Breast epithelium (tissue), 4 donors: ENCODE measurements at regions of chr17 and their contacts with region 1.

Region 1: DNA sequence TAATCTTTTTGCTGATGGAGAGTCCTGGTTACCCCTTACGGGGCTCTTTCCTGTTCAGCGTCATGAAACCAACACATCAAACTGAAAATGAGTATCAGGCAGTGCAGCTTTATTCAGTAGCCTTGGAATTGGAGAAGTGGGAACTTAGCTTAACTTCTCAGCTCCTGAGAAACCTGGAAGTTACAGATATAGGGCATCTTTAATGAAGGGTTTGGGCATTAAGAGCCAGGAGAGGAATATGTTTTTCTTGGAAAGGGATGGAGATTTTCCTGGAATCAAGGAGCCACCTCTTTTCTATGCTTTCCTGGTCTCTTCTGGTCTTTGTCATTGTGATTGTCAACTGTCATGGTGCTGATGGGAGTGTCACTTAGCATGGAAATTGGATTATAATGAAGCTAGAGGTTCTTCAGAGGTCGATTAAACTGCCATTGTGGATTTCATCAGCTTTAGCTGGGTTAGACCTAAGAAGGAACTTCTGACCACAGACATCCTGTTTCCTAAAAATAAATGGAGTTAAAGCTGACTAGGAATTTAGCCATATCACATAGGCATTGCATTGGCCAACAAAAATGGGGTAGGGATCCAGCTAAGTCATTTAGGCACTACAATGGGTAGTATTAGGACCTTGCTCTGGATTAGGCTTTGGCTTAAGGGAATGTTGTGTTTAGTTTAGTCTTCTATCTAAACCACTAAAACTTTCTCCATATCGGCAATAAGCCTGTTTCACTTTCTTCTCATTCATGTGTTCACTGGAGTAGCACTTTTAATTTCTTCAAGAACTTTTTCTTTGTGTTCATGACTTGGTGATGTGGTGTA is 186.4 kb downstream of the BCAS3 start:
- DNase-seq: no peak
- H3K4me3 ChIP-seq: no peak overlapping the region
- H3K27ac ChIP-seq: no peak overlapping the region
- H3K4me1 ChIP-seq: no peaks in the 10 kb centered on the region
- H3K27me3 ChIP-seq: no peaks in the 10 kb centered on the region
- CTCF ChIP-seq: no peak
- POLR2A ChIP-seq: no peak

Region 2: DNA sequence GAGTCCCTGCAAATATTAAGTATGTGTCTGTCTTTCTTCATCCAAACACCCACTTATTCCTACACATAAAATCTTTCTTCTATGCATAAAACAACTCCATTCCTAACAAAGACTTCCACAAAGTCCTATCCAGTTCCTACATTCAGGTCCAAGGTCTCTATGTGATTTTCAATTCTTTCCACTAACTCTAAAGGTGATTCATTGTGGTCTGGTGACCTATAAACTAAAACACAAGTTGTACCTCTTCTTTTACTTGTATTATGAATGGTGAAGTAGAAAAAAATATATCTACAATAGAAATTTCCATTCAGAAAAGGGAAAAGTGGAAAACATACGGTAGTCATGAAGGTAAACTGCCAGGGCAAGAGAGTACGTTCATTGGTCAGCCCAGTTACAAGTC is 528.8 kb before region 1 on chr17:
- intact Hi-C with region 1: loop called (anchors 5 kb)
- DNase-seq: no peak
- H3K4me3 ChIP-seq: no peak overlapping the region
- H3K27ac ChIP-seq: no peak overlapping the region
- H3K4me1 ChIP-seq: no peaks in the 10 kb centered on the region
- H3K27me3 ChIP-seq: no peaks in the 10 kb centered on the region
- CTCF ChIP-seq: no peak
- POLR2A ChIP-seq: no peak

Region 3: DNA sequence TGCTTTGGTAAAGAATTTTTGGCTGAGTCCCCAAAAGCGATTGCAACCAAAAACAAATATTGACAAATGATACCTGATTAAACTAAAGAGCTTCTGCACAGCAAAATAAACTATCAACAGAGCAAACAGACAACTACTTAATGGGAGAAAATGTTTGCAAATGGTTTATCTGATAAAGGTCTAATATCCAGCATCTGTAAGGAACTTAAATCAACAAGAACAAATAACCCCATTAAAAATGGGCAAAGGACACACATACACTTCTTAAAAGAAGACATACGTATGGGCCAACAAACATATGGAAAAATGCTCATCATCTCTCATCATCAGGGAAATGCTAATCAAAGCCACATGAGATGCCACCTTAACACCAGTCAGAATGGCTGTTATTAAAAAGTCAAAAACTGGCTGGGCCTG is 56.1 kb after region 1 on chr17:
- intact Hi-C with region 1: no loop called
- DNase-seq: no peak
- H3K4me3 ChIP-seq: no peak overlapping the region
- H3K27ac ChIP-seq: no peak overlapping the region
- H3K4me1 ChIP-seq: no peaks in the 10 kb centered on the region
- H3K27me3 ChIP-seq: no peaks in the 10 kb centered on the region
- CTCF ChIP-seq: no peak
- POLR2A ChIP-seq: no peak

Region 4: DNA sequence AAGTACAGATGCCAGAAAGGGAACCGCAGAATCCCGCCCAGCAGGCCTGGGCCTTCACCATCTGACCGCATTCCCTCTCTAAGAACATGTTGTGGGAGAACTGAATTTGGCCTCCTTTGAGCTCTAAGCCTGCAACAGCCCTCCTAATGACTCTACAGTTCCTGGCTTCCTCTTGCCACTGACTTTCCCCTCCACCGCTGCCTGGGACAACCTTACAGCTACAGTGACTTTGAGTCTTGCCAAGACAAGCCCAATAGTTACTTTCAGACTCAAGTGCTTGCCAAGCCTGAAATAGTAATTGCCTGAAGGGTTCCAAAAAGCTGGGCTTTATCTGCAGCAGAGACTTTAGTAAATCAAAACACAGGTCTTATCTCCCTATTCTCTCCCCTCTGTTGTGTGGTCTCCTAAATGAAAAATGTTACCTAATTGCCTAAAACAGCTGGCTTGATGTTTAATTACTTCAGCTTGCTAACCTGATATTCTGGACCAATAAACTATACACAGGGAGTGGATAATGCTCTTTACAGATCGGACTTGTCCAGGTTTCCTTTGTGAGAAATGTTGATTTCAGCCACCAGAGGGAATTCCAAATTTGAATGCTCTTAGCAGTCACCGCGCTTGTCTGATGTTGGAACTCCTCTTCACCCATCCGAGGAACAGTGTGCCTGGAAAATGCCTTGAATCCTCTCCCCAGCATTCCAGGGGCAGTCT is 450.4 kb after region 1 on chr17:
- intact Hi-C with region 1: no loop called
- DNase-seq: peak in 1 of 2 donors; percentile 73
- H3K4me3 ChIP-seq: peak overlapping the region in 1 of 3 donors; percentile 24
- H3K27ac ChIP-seq: peak overlapping the region; percentile 63 to 67
- H3K4me1 ChIP-seq: peaks cover 0 to 17% of the 10 kb centered on the region in 2 donors
- H3K27me3 ChIP-seq: no peaks in the 10 kb centered on the region
- CTCF ChIP-seq: peak in 1 of 3 donors; percentile 27
- POLR2A ChIP-seq: no peak